Mammary epithelial cell (primary cell): ENCODE measurements at regions of chr5 and their contacts with region 1.

Region 1: DNA sequence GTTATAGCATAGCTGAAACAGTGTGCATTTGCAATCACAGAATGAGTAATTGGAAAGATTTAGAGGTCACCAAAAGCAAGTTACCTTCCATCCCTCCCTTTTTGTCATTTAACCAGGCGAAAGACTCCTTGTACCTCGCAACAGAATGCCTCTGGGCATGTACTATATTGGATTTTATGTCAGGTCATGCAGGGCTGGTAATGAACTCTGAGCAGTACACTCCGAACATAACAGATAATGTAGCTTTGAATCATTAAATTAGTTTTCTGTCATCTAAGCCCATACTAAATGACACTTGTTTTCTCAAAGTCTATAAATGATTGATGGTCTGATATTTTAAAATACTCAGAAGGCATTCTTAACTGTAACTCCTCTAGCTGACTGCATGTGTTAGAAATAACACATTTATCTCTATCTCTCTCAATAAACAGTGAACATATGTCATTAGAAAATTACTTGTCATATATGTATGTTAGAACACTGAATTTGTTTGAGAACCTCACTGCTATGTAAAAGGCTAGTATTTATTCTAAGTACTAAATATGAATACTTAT is 541.2 kb downstream of the CDH10 start:
- DNase-seq: no peak
- H3K4me3 ChIP-seq: no peak overlapping the region
- H3K27ac ChIP-seq: no peak overlapping the region
- H3K4me1 ChIP-seq: no peaks in the 10 kb centered on the region
- H3K27me3 ChIP-seq: no peaks in the 10 kb centered on the region
- CTCF ChIP-seq: no peak

Region 2: GRCh38 chr5:23655674-23656073 is 447.9 kb before region 1 on chr5:
- CTCF ChIA-PET with region 1: no interaction called
- dilution Hi-C with region 1: no loop called
- in situ Hi-C with region 1: no loop called
- intact Hi-C with region 1: no loop called
- DNase-seq: peak; percentile 83
- H3K4me3 ChIP-seq: no peak overlapping the region
- H3K27ac ChIP-seq: no peak overlapping the region
- H3K4me1 ChIP-seq: peaks cover 12% of the 10 kb centered on the region
- H3K27me3 ChIP-seq: no peaks in the 10 kb centered on the region
- CTCF ChIP-seq: no peak

Region 3: GRCh38 chr5:24005384-24005783 is 98.2 kb before region 1 on chr5:
- CTCF ChIA-PET with region 1: no interaction called
- dilution Hi-C with region 1: no loop called
- in situ Hi-C with region 1: loop called (anchors 10 to 25 kb)
- intact Hi-C with region 1: no loop called
- DNase-seq: no peak
- H3K4me3 ChIP-seq: no peak overlapping the region
- H3K27ac ChIP-seq: no peak overlapping the region
- H3K4me1 ChIP-seq: no peaks in the 10 kb centered on the region
- H3K27me3 ChIP-seq: no peaks in the 10 kb centered on the region
- CTCF ChIP-seq: peak; percentile 31 to 53